ENCODE measurements at regions of chr5 and their contacts with region 1.

Region 1: GRCh38 chr5:155943516-155944407 is 383.2 kb upstream of the SGCD start:
- DNase-seq: no peak
- H3K4me3 ChIP-seq: no peak overlapping the region
- H3K27me3 ChIP-seq: no peaks in the 10 kb centered on the region
- CTCF ChIP-seq: peak; percentile 90

Region 2: GRCh38 chr5:155290937-155291336 is 652.8 kb before region 1 on chr5:
- CTCF ChIA-PET with region 1: no interaction called
- POLR2A ChIA-PET with region 1: no interaction called
- DNase-seq: no peak
- H3K4me3 ChIP-seq: no peak overlapping the region
- H3K27me3 ChIP-seq: no peaks in the 10 kb centered on the region
- CTCF ChIP-seq: no peak

Region 3: DNA sequence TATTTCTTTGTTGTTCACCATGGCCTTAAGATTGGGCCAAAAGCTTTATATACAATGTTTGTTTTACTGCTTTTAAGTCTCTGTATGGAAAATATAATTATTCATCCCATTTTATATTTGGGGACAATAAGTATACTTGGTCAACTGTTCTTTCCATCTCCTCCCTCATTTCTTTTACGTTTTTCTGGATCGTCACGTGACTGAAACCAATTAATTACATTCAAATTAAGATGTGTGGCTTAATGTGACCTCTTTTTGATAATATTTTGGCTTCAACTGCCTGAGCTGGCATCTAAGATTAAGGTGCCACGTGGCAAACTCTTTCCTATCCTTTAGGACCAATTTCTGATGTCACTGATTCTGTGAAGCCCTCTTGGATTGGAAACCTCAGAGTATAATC is 133.2 kb after region 1 on chr5:
- CTCF ChIA-PET with region 1: no interaction called
- POLR2A ChIA-PET with region 1: no interaction called
- DNase-seq: no peak
- H3K4me3 ChIP-seq: no peak overlapping the region
- H3K27me3 ChIP-seq: no peaks in the 10 kb centered on the region
- CTCF ChIP-seq: no peak

Region 4: GRCh38 chr5:156815988-156816599 is 872.3 kb after region 1 on chr5:
- CTCF ChIA-PET with region 1: interaction called, 30 read pairs
- POLR2A ChIA-PET with region 1: interaction called, 4 read pairs
- DNase-seq: no peak
- H3K4me3 ChIP-seq: no peak overlapping the region
- H3K27me3 ChIP-seq: no peaks in the 10 kb centered on the region; the same call in 1 of the 2 replicates
- CTCF ChIP-seq: peak; percentile 69

Region 5: GRCh38 chr5:156824800-156825199 is 881.0 kb after region 1 on chr5:
- CTCF ChIA-PET with region 1: interaction called, 28 read pairs
- POLR2A ChIA-PET with region 1: no interaction called
- DNase-seq: peak; percentile 9
- H3K4me3 ChIP-seq: no peak overlapping the region
- H3K27me3 ChIP-seq: no peaks in the 10 kb centered on the region
- CTCF ChIP-seq: peak; percentile 52